Tibial artery (tissue), 4 donors: ENCODE measurements at regions of chr10 and their contacts with region 1.

Region 1: DNA sequence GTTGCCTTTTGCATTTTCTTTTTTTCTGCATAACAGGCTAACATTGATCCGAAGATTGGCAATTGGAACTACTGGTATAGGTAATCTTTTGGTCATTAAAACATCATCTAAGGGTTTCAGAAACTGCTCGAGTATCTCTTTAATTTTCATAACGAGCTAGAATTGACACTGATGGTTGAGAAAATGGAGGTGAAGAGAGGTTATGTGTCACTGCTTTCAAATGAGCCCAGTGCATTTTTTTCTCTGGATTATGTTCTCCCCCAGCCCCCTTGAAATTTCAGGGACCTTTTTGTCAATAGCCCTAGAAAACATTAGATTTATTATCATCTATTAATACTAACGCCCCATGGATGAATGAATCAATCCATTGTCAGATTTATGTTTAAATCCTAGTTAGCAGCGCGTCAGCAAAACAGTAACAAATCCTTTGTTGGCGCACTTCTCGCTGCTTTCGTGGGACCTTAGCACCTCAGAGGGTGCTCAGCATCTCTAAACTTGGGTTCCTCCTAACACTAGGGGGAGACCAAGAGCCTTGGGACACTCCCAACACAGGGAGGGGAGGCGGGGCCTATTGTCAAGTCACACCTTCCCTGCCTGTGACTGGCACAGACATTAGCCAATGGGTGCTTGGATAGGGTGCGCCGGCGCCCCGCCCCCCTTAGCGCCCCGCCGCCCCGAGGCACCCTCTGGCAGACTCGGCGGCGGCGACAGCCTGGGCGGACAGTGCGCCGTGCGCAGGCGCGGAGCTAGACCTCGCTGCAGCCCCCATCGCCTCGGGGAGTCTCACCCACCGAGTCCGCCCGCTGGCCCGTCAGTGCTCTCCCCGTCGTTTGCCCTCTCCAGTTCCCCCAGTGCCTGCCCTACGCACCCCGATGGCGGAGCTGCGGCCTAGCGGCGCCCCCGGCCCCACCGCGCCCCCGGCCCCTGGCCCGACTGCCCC is at the start of gene SUFU:
- DNase-seq: peak; percentile 98 to 99
- H3K4me3 ChIP-seq: peak within 1 kb of the TSS; percentile 68 to 75
- H3K27ac ChIP-seq: peak within 1 kb of the TSS; percentile 74 to 88
- H3K4me1 ChIP-seq: peaks cover 0 to 74% (median 46%) of the 10 kb centered on the region in 4 donors
- H3K27me3 ChIP-seq: no peaks in the 10 kb centered on the region
- CTCF ChIP-seq: peak; percentile 90 to 92

Region 2: GRCh38 chr10:102583435-102584417 is 80.2 kb after region 1 on chr10:
- intact Hi-C with region 1: loop called (anchors 5 kb)
- DNase-seq: peak; percentile 88 to 89
- H3K4me3 ChIP-seq: no peak overlapping the region
- H3K27ac ChIP-seq: no peak overlapping the region
- H3K4me1 ChIP-seq: no peaks in the 10 kb centered on the region
- H3K27me3 ChIP-seq: no peaks in the 10 kb centered on the region
- CTCF ChIP-seq: peak; percentile 84 to 91

Region 3: DNA sequence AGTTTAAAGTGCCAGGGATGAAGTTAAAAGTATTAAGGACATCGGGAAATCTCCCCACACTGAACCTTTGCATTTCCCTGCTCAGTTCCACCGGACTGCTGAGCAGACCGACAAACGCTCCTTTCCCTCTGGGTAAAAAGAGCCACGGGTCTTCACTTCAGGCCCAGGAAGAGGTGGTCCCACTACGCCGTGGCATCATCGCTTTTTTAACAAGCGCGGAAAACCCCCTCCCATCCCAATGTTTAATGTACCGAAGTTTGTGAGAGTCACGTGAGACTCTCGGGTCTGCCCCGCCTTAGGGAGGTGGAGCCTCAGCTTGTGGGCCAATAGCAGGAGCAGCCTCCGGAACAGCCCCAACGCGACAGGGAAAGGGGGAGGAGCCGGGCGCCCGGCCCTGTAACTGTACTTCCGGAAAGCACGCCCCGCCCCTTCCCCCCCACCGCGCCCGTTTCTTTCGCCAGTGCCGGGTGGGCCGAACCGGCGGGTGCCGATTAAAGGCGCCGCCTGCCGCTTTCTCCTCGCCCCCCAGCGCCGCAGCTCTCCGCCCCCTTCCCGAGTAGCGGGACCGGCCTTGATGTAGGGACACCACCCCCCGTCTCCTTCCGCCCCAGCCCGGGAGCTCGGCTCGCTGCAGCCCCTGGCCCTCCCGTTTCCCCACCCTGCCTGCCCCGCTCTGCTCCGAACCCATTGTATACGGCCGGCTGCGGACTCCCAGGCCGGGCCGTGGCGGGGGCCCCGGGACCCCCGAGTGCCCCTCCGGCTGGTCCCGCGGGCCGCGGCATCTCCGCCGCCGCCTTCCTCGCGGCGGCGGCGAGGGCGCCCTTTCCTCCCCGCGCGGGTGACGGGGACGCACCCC is 138.6 kb after region 1 on chr10:
- intact Hi-C with region 1: loop called (anchors 5 kb)
- DNase-seq: peak; percentile 99
- H3K4me3 ChIP-seq: peak overlapping the region; percentile 86 to 90
- H3K27ac ChIP-seq: peak overlapping the region; percentile 97 to 99
- H3K4me1 ChIP-seq: peaks cover 0 to 10% (median 7%) of the 10 kb centered on the region in 4 donors
- H3K27me3 ChIP-seq: no peaks in the 10 kb centered on the region
- CTCF ChIP-seq: no peak